ENCODE measurements at regions of chr11 and their contacts with region 1.

Region 1: GRCh38 chr11:64358907-64359711 is at the start of gene RPS6KA4:
- DNase-seq: peak; percentile 54 to 79
- H3K4me3 ChIP-seq: peak within 1 kb of the TSS; percentile 91
- H3K27ac ChIP-seq: peak within 1 kb of the TSS; percentile 59
- H3K4me1 ChIP-seq: peaks cover 42% of the 10 kb centered on the region
- H3K27me3 ChIP-seq: no peaks in the 10 kb centered on the region
- CTCF ChIP-seq: no peak
- total RNA-seq, gene RPS6KA4: 60.6 and 64.3 TPM in 2 replicates

Region 2: GRCh38 chr11:64269380-64270234 is 89.5 kb before region 1 on chr11:
- CTCF ChIA-PET with region 1: interaction called, 11 read pairs
- POLR2A ChIA-PET with region 1: interaction called, 7 read pairs
- intact Hi-C with region 1: loop called (anchors 1 kb)
- DNase-seq: peak; percentile 99
- H3K4me3 ChIP-seq: peak overlapping the region; percentile 63
- H3K27ac ChIP-seq: peak overlapping the region; percentile 89
- H3K4me1 ChIP-seq: peaks cover 25% of the 10 kb centered on the region
- H3K27me3 ChIP-seq: no peaks in the 10 kb centered on the region
- CTCF ChIP-seq: peak; percentile 35; the same call in 1 of the 2 replicates

Region 3: DNA sequence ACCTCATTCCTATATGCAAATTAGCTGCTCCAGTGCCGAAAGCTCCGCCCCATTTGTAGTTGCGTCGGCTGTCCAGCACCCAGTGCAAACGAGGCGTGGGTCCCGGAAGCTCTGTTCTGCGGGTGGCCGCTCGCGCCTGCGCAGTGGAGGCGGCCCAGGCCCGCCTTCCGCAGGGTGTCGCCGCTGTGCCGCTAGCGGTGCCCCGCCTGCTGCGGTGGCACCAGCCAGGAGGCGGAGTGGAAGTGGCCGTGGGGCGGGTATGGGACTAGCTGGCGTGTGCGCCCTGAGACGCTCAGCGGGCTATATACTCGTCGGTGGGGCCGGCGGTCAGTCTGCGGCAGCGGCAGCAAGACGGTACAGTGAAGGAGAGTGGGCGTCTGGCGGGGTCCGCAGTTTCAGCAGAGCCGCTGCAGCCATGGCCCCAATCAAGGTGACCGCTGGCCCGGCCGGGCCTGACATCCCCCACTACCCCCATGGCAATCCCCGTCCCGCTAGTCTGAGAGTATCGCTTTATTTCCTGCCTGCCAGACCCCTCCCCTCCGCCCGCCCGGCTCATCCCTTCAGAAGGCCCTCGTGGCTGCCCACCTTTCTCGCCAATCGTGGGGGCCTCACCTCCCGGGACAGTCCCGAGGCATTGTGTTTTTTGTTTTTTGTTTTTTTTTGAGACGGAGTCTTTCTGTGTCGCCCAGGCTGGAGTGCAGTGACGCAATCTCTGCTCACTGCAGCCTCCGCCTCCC is 41.0 kb before region 1 on chr11 and contains the start of gene PRDX5:
- CTCF ChIA-PET with region 1: interaction called, 87 read pairs
- POLR2A ChIA-PET with region 1: interaction called, 38 read pairs
- intact Hi-C with region 1: loop called (anchors 1 kb)
- DNase-seq: peak; percentile 92 to 99
- H3K4me3 ChIP-seq: peak within 1 kb of the TSS; percentile 69
- H3K27ac ChIP-seq: peak within 1 kb of the TSS; percentile 87
- H3K4me1 ChIP-seq: peaks cover 47% of the 10 kb centered on the region
- H3K27me3 ChIP-seq: no peaks in the 10 kb centered on the region
- CTCF ChIP-seq: peak; percentile 39; the same call in 1 of the 2 replicates
- total RNA-seq, gene PRDX5: 381 and 441 TPM in 2 replicates

Region 4: DNA sequence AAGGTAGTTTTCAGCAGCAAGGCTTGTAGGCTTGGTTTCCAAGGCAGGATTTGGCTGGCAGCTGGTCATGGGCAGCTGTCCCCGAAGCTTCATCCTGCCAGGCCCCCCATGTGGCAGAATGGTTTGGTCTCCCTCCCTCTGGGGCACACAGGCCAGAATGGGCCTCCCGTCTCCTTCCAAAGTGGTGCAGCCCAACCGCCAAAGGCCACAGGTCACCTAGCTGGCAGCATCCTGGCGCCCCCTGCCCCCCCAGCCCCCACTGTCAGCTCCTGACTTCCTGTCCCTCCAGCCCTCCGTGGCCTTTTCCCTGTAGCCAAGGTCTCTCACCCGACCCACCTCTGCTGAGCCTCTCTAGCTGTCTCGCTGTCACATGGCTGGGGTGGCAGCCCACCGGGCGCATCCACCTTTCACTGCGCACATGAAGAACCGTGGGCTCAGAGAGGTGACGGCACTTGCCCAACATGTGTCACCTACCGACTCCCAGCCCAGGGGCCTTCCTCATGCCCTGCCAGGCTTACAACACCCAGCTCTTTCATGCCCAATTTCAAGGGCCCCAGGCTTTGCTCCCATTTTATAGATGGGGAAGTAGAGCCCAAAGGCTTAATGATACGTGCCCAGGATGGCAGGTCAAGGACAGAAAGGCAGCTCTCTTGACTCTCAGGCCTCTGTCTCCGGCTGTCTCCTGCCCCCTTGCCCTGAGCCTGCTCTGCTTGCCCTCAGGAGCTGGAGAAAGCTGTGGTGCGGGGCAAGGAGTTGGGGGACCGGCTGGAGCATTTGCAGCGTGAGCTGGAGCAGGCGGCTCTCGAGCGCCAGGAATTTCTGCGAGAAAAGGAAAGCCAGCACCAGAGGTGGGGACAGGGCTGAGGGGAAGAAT is 10.3 kb before region 1 on chr11:
- CTCF ChIA-PET with region 1: interaction called, 14 read pairs
- POLR2A ChIA-PET with region 1: no interaction called
- intact Hi-C with region 1: no loop called
- DNase-seq: no peak
- H3K4me3 ChIP-seq: no peak overlapping the region
- H3K27ac ChIP-seq: no peak overlapping the region
- H3K4me1 ChIP-seq: peaks cover 19% of the 10 kb centered on the region
- H3K27me3 ChIP-seq: no peaks in the 10 kb centered on the region
- CTCF ChIP-seq: no peak

Region 5: GRCh38 chr11:64386306-64386702 is 27.2 kb after region 1 on chr11:
- CTCF ChIA-PET with region 1: interaction called, 13 read pairs
- POLR2A ChIA-PET with region 1: no interaction called
- intact Hi-C with region 1: no loop called
- DNase-seq: peak; percentile 81 to 98
- H3K4me3 ChIP-seq: no peak overlapping the region
- H3K27ac ChIP-seq: no peak overlapping the region
- H3K4me1 ChIP-seq: peaks cover 44% of the 10 kb centered on the region
- H3K27me3 ChIP-seq: no peaks in the 10 kb centered on the region
- CTCF ChIP-seq: no peak

Region 6: DNA sequence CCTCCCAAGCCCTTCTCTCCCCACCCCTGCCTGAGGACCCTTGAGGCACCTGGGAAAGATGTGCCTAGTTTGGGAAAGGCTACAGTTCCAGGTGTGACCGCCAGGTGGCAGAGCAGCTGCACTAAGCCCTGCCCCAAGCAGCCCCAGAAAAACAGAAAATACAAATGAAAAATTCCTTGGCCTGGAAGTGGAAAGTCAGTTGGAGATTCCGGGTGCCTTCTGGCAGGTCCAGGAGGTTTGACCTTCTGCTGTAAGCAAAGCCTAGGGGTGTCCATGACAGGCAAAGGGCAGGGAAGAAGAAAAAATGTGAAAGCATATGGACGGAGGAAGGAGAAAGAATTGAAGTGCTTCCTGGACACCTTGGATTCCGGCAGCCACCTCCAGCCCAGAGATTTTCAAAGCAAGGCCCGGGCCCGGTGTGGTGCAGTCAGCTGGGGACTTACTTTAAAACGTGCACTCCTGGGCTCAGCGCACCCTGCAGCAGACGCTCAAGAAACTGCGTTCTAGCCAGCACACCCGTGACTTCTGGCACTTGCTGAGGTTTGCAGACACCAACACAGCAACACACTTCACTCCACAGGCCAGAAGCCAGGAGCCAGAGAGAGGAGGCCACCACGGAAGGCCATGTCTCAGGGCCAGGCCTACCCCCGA is 194.6 kb after region 1 on chr11:
- CTCF ChIA-PET with region 1: no interaction called
- POLR2A ChIA-PET with region 1: no interaction called
- intact Hi-C with region 1: loop called (anchors 5 kb)
- DNase-seq: peak in 1 of 2 experiments; percentile 58
- H3K4me3 ChIP-seq: no peak overlapping the region
- H3K27ac ChIP-seq: no peak overlapping the region
- H3K4me1 ChIP-seq: peaks cover 10% of the 10 kb centered on the region; the same call in 1 of the 2 replicates
- H3K27me3 ChIP-seq: no peaks in the 10 kb centered on the region
- CTCF ChIP-seq: peak; percentile 100

Region 7: DNA sequence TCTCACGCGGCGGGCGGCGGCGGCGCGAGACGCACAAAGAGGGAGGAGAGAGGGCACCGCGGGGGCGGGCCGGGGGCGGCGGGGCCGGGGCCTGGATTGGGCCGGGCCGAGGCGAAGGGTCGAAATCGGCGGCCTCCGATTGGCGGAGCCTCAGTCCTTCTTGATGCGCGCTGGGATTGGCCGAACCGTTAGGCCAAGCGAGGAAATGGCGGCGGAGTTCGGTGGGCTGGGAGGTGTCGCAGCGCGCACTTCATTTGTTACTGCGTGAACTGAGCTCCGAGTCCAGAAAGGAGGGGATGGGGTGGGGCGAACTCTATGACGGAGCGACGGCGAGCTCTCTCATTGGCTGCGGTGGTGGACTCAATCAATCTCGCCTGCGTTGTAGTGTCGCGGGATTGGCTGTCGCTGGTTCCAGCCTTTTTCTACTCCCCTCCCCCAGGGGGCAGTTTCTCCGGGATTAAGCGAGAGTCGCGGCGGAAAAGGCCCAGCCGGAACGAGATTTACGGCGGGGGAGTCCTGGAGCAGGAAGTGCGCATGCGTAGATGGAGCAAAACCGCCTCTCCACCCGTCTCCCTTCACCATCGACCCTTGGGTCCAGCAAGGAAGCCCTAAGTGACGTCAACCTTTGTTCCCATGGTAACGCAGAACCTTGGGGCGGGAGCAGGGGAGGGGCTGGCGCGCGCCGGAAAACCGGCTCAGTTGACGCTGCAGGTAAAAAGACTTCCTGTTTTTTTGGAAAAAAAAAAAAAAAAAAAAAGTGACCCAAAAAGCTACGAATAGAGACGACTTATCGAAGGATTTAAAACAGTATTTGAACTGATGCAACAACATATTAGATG is 419.6 kb after region 1 on chr11 and contains the start of gene SF1:
- CTCF ChIA-PET with region 1: no interaction called
- POLR2A ChIA-PET with region 1: no interaction called
- intact Hi-C with region 1: loop called (anchors 2 kb)
- DNase-seq: peak; percentile 100
- H3K4me3 ChIP-seq: peak within 1 kb of the TSS; percentile 98
- H3K27ac ChIP-seq: peak within 1 kb of the TSS; percentile 86
- H3K4me1 ChIP-seq: peaks cover 26% of the 10 kb centered on the region
- H3K27me3 ChIP-seq: no peaks in the 10 kb centered on the region
- CTCF ChIP-seq: 0 out of 2 replicates have a peak, but pooled peaks have one; percentile 2
- total RNA-seq, gene SF1: 253 and 336 TPM in 2 replicates

Region 8: GRCh38 chr11:64887757-64888405 is 528.8 kb after region 1 on chr11:
- CTCF ChIA-PET with region 1: no interaction called
- POLR2A ChIA-PET with region 1: no interaction called
- intact Hi-C with region 1: no loop called
- DNase-seq: peak in 1 of 2 experiments; percentile 87
- H3K4me3 ChIP-seq: peak overlapping the region; percentile 41; the same call in 1 of the 2 replicates
- H3K27ac ChIP-seq: no peak overlapping the region
- H3K4me1 ChIP-seq: peaks cover 24% of the 10 kb centered on the region
- H3K27me3 ChIP-seq: no peaks in the 10 kb centered on the region
- CTCF ChIP-seq: peak; percentile 99

Measured in PC-9 (cell line).